SK-N-SH (cell line): ENCODE measurements at regions of chr12 and their contacts with region 1.

Region 1: GRCh38 chr12:47767216-47767724 is 5.8 kb upstream of the SLC48A1 start:
- DNase-seq: no peak
- H3K4me3 ChIP-seq: no peak overlapping the region
- H3K27ac ChIP-seq: no peak overlapping the region
- H3K4me1 ChIP-seq: peaks cover 7 to 37% of the 10 kb centered on the region in 2 experiments; a peak in 2 of 4 replicates
- H3K27me3 ChIP-seq: no peaks in the 10 kb centered on the region
- CTCF ChIP-seq: peak; percentile 54
- EP300 ChIP-seq: no peak
- RAD21 ChIP-seq: peak; percentile 79

Region 2: GRCh38 chr12:47657565-47657964 is 109.7 kb before region 1 on chr12:
- CTCF ChIA-PET with region 1: no interaction called
- POLR2A ChIA-PET with region 1: no interaction called
- DNase-seq: no peak
- H3K4me3 ChIP-seq: no peak overlapping the region
- H3K27ac ChIP-seq: no peak overlapping the region
- H3K4me1 ChIP-seq: peaks cover 0 to 1% of the 10 kb centered on the region in 2 experiments; a peak in 1 of 4 replicates
- H3K27me3 ChIP-seq: no peaks in the 10 kb centered on the region
- CTCF ChIP-seq: no peak
- EP300 ChIP-seq: no peak
- RAD21 ChIP-seq: no peak

Region 3: DNA sequence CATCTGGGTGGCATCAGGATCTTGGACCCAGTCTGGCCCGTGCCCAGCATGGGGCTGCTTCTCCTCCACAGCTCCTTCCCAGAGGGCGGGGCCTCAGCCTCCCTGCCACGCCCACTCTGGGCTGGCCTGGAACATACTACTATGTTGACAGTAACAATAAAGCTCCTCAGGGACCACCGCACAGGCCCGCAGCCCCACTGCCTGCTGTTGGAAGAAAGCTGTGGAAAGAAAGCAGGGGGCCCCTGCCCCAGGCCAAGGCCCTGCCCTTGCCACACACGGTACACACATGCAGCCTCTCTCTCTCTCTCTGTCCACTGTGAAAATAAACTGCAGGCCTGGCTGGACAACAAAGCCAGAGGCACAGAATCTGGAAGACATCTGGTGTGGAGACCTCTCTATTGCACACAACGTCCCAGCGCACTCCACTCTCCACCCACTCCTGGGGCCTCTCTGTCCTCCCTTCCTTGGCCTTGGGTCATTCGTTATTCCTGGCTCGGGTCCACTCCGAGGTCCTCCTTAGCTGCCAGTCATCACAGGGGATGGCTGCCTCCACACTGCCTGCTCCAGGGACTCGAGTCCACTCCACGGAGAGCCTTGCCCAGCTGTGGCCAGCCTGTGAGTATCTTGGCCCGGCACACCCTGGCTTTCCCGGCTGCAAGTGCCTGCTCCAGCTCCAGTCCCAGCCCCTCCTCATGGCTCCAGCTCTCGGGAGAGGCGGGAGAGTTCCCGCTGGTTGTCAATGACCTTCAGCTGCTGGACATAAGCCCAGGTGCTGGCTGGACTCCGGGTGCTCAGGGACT is 30.2 kb before region 1 on chr12:
- CTCF ChIA-PET with region 1: interaction called, 1,294 read pairs
- POLR2A ChIA-PET with region 1: interaction called, 10 read pairs
- DNase-seq: peak; percentile 84
- H3K4me3 ChIP-seq: no peak overlapping the region; a peak in 1 of 4 replicates
- H3K27ac ChIP-seq: peak overlapping the region; percentile 18 to 94; a peak in 3 of 4 replicates
- H3K4me1 ChIP-seq: peaks cover 20 to 60% of the 10 kb centered on the region in 2 experiments; a peak in 3 of 4 replicates
- H3K27me3 ChIP-seq: no peaks in the 10 kb centered on the region
- CTCF ChIP-seq: no peak
- EP300 ChIP-seq: no peak; a peak in 1 of 4 replicates
- RAD21 ChIP-seq: no peak

Region 4: DNA sequence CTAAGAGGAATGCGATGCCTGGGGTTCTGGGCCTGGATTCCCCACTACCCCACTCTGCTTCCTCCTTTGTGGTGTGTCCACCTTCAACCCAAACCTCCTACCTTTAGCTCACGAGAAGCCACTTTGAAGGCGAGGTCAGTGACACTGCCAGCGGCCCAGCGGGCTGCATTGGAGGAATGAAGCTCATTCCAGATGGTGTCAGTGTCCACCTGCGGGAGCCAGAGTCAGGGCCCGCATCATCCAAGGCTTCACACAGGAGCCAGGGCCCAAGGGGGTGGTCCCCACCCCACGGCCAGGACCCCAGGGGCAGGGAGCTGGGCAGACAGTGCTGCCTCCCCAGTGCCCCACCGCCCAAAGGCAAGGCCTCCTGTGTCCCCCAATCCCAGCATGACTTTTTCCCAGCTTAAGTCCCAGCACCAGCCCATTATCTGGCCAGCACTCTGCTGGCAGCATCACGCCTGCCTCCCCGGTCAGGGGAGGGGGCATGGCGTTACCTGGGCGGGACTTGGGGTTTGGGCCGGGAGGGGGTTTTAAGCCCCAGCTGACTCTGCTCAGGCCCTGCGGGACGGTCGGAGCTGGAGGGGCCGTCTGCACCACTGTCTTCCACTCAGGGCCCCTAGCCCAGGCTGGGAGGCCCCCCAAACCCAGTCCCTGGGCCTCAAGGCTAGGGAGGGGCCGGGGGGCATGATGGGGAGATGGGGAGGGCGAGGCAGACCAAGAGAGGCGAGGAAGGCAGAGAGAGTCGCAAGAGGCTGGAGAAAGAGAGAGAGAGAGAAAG is 22.6 kb after region 1 on chr12:
- CTCF ChIA-PET with region 1: no interaction called
- POLR2A ChIA-PET with region 1: no interaction called
- DNase-seq: no peak
- H3K4me3 ChIP-seq: no peak overlapping the region
- H3K27ac ChIP-seq: no peak overlapping the region
- H3K4me1 ChIP-seq: peaks cover 0 to 5% of the 10 kb centered on the region in 2 experiments; a peak in 1 of 4 replicates
- H3K27me3 ChIP-seq: no peaks in the 10 kb centered on the region
- CTCF ChIP-seq: no peak
- EP300 ChIP-seq: no peak
- RAD21 ChIP-seq: no peak; the same call in 1 of the 2 replicates